Aorta (tissue), 5 donors: ENCODE measurements at regions of chr10 and their contacts with region 1.

Region 1: GRCh38 chr10:45179691-45180090 is 135.7 kb downstream of the OR13A1 start:
- DNase-seq: peak; percentile 82 to 87
- ATAC-seq: peak; percentile 79
- H3K4me3 ChIP-seq: no peak overlapping the region
- H3K27ac ChIP-seq: peak overlapping the region in 1 of 2 donors; percentile 55
- H3K4me1 ChIP-seq: no peaks in the 10 kb centered on the region
- H3K27me3 ChIP-seq: no peaks in the 10 kb centered on the region

Region 2: DNA sequence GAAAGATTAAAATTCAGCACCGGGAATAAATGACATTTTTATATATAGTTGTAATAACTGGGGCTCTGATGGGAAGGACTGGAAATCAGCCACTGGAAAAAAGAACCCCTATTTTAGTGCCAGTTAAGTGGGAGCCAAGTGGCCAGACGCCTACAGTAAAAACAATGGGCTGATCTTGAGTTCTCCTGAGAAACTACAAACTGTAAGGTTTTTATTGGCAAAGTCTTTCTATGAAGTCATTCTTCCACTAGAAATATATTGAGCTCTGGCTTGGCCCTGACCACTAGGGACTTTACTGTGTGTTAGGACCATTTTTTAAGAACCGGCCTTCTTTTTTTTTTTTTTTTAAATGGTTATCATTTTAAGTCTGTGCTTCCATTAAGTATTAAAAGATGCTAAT is 99.4 kb before region 1 on chr10:
- intact Hi-C with region 1: loop called in 1 of 2 experiments (anchors 2 kb)
- DNase-seq: no peak
- ATAC-seq: peak; percentile 74
- H3K4me3 ChIP-seq: no peak overlapping the region
- H3K27ac ChIP-seq: no peak overlapping the region
- H3K4me1 ChIP-seq: peaks cover 0 to 6% of the 10 kb centered on the region in 2 donors
- H3K27me3 ChIP-seq: no peaks in the 10 kb centered on the region